HCT116 (cell line): ENCODE measurements at regions of chr2 and their contacts with region 1.

Region 1: GRCh38 chr2:213251618-213252017 is 32.6 kb upstream of the SPAG16 start:
- DNase-seq: peak; percentile 50
- ATAC-seq: peak; percentile 88
- H3K4me3 ChIP-seq: no peak overlapping the region
- H3K27ac ChIP-seq: no peak overlapping the region
- H3K4me1 ChIP-seq: no peaks in the 10 kb centered on the region
- H3K27me3 ChIP-seq: no peaks in the 10 kb centered on the region
- CTCF ChIP-seq: peak; percentile 22 to 63 (median 56); a peak in 3 of 6 replicates
- POLR2A ChIP-seq: no peak
- RAD21 ChIP-seq: peak; percentile 87

Region 2: DNA sequence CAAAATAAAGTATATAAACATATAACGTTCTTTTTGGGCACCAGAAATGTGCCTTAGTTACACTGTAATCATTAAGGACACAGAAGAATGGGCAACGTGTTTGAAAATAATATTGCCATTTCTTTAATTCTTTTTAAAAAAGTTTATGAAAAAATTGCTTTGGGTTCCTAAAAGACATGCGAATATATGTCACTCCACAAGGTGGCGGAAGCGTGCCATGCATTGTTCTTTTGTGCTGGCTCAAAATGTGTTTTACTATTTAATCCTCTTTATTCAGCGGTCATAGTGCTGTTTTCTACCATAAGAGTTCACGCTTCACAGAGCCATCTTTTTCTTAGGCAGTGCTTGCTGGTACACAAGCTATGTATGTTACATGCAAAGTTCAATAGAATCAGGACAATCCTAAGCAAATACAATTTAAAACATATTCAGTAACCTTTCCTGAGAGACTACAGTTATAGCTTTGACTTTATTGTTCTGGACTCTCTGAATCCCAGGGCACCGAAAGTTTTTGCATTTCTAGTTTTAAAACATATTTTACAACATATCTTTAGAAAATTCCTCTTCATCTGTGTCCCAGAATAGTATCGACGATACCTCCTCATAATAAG is 565.2 kb before region 1 on chr2:
- CTCF ChIA-PET with region 1: no interaction called
- POLR2A ChIA-PET with region 1: no interaction called
- RAD21 ChIA-PET with region 1: no interaction called
- intact Hi-C with region 1: loop called (anchors 2 kb)
- DNase-seq: peak; percentile 44
- ATAC-seq: peak; percentile 61
- H3K4me3 ChIP-seq: no peak overlapping the region
- H3K27ac ChIP-seq: no peak overlapping the region
- H3K4me1 ChIP-seq: no peaks in the 10 kb centered on the region
- H3K27me3 ChIP-seq: no peaks in the 10 kb centered on the region
- CTCF ChIP-seq: peak; percentile 72 to 84 (median 79)
- POLR2A ChIP-seq: no peak
- RAD21 ChIP-seq: peak; percentile 90

Region 3: GRCh38 chr2:212905640-212906220 is 345.9 kb before region 1 on chr2:
- CTCF ChIA-PET with region 1: no interaction called
- POLR2A ChIA-PET with region 1: no interaction called
- RAD21 ChIA-PET with region 1: no interaction called
- intact Hi-C with region 1: no loop called
- DNase-seq: no peak
- ATAC-seq: no peak
- H3K4me3 ChIP-seq: no peak overlapping the region
- H3K27ac ChIP-seq: no peak overlapping the region
- H3K4me1 ChIP-seq: 0 out of 4 replicates have a peak, but pooled peaks cover 0 to 4% of the 10 kb centered on the region in 2 experiments
- H3K27me3 ChIP-seq: no peaks in the 10 kb centered on the region
- CTCF ChIP-seq: no peak
- POLR2A ChIP-seq: no peak
- RAD21 ChIP-seq: no peak

Region 4: GRCh38 chr2:213411582-213412289 is 160.1 kb after region 1 on chr2:
- CTCF ChIA-PET with region 1: no interaction called
- POLR2A ChIA-PET with region 1: no interaction called
- RAD21 ChIA-PET with region 1: no interaction called
- intact Hi-C with region 1: no loop called
- DNase-seq: peak; percentile 72
- ATAC-seq: peak; percentile 49
- H3K4me3 ChIP-seq: no peak overlapping the region
- H3K27ac ChIP-seq: no peak overlapping the region
- H3K4me1 ChIP-seq: peaks cover 0 to 14% of the 10 kb centered on the region in 2 experiments; a peak in 2 of 4 replicates
- H3K27me3 ChIP-seq: no peaks in the 10 kb centered on the region
- CTCF ChIP-seq: no peak
- POLR2A ChIP-seq: no peak
- RAD21 ChIP-seq: no peak

Region 5: GRCh38 chr2:213789940-213790339 is 538.3 kb after region 1 on chr2:
- CTCF ChIA-PET with region 1: no interaction called
- POLR2A ChIA-PET with region 1: no interaction called
- RAD21 ChIA-PET with region 1: no interaction called
- intact Hi-C with region 1: loop called (anchors 10 kb)
- DNase-seq: no peak
- ATAC-seq: no peak
- H3K4me3 ChIP-seq: no peak overlapping the region
- H3K27ac ChIP-seq: no peak overlapping the region
- H3K4me1 ChIP-seq: no peaks in the 10 kb centered on the region
- H3K27me3 ChIP-seq: no peaks in the 10 kb centered on the region
- CTCF ChIP-seq: no peak
- POLR2A ChIP-seq: no peak
- RAD21 ChIP-seq: no peak

Region 6: DNA sequence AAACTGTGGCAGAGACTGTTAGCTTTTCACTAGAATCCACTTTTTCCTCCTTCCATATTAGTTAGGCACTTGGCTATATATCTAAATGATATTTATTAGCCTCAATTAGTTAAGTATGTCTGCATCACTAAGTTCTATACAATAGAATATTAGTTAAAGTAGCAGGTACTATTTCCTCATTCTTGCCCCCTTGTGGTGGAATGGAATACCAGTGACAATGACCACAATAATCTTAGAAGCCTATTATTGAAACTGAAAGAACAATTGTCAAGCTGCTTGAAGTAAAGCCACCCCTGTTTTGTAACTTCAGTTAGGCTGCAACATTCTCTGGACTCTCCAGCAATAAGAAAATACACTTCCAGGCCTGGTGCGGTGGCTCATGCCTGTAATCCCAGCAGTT is 682.9 kb after region 1 on chr2:
- CTCF ChIA-PET with region 1: no interaction called
- POLR2A ChIA-PET with region 1: no interaction called
- RAD21 ChIA-PET with region 1: no interaction called
- intact Hi-C with region 1: loop called (anchors 2 kb)
- DNase-seq: no peak
- ATAC-seq: peak; percentile 66; the same call in 1 of the 2 replicates
- H3K4me3 ChIP-seq: no peak overlapping the region
- H3K27ac ChIP-seq: no peak overlapping the region
- H3K4me1 ChIP-seq: peaks cover 0 to 4% of the 10 kb centered on the region in 2 experiments; a peak in 2 of 4 replicates
- H3K27me3 ChIP-seq: no peaks in the 10 kb centered on the region
- CTCF ChIP-seq: peak; percentile 27 to 60 (median 49); a peak in 5 of 6 replicates
- POLR2A ChIP-seq: no peak
- RAD21 ChIP-seq: peak; percentile 43

Region 7: GRCh38 chr2:214310319-214310718 is 1058.7 kb after region 1 on chr2:
- CTCF ChIA-PET with region 1: no interaction called
- POLR2A ChIA-PET with region 1: no interaction called
- RAD21 ChIA-PET with region 1: no interaction called
- intact Hi-C with region 1: loop called (anchors 10 kb)
- DNase-seq: no peak
- ATAC-seq: peak; percentile 82
- H3K4me3 ChIP-seq: no peak overlapping the region
- H3K27ac ChIP-seq: no peak overlapping the region
- H3K4me1 ChIP-seq: no peaks in the 10 kb centered on the region
- H3K27me3 ChIP-seq: no peaks in the 10 kb centered on the region
- CTCF ChIP-seq: peak; percentile 15 to 50 (median 31); a peak in 3 of 6 replicates
- POLR2A ChIP-seq: no peak
- RAD21 ChIP-seq: peak; percentile 50

Region 8: DNA sequence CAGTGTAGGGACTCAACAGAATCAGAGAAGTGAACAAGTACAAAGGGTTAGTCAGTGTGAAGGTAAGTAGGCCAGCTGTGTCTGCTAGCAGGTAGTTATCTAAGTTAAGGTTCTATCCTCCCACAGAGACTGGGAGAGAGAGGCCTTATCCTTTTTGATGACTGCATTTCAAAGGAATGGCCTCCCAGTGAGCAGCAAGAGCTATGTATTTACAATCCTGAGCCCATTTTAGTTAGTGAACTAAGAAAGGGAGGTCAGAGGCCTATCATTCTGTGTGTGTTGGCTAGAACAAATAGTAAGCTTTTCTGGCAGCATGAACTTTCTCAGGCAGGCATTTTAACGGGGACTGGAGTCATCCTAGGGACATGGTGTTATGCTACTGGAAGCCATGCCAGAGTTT is 1342.1 kb after region 1 on chr2:
- CTCF ChIA-PET with region 1: no interaction called
- POLR2A ChIA-PET with region 1: no interaction called
- RAD21 ChIA-PET with region 1: no interaction called
- intact Hi-C with region 1: loop called (anchors 2 kb)
- DNase-seq: peak; percentile 27
- ATAC-seq: peak; percentile 76
- H3K4me3 ChIP-seq: no peak overlapping the region
- H3K27ac ChIP-seq: no peak overlapping the region
- H3K4me1 ChIP-seq: peaks cover 5 to 8% of the 10 kb centered on the region in 2 experiments; a peak in 3 of 4 replicates
- H3K27me3 ChIP-seq: no peaks in the 10 kb centered on the region
- CTCF ChIP-seq: no peak
- POLR2A ChIP-seq: no peak
- RAD21 ChIP-seq: no peak

Region 9: DNA sequence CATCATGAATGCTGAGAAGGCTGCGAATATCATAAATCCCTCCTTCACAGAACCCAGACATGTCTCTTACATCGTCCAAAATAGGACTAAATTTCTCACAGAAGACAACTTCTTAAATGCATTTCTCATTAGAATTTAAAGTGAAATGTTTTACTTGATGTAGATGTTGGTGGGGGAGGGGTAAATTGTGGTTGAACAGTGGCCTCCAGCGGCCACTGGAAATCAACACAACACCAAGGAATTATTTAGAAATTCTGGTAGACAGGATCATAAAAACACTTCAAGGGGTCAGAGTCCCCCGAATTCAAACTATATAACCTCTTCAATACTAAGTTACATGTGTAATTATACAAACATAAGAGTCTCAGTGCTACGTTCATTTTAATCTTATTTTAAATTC is 1750.9 kb after region 1 on chr2:
- CTCF ChIA-PET with region 1: no interaction called
- POLR2A ChIA-PET with region 1: no interaction called
- RAD21 ChIA-PET with region 1: no interaction called
- intact Hi-C with region 1: loop called (anchors 5 kb)
- DNase-seq: peak; percentile 31
- ATAC-seq: peak; percentile 74
- H3K4me3 ChIP-seq: no peak overlapping the region
- H3K27ac ChIP-seq: no peak overlapping the region
- H3K4me1 ChIP-seq: peaks cover 0 to 2% of the 10 kb centered on the region in 2 experiments; a peak in 2 of 4 replicates
- H3K27me3 ChIP-seq: no peaks in the 10 kb centered on the region
- CTCF ChIP-seq: peak; percentile 45 to 76 (median 62); a peak in 5 of 6 replicates
- POLR2A ChIP-seq: no peak
- RAD21 ChIP-seq: peak; percentile 72